MCF 10A (cell line): ENCODE measurements at regions of chr6 and their contacts with region 1.

Region 1: DNA sequence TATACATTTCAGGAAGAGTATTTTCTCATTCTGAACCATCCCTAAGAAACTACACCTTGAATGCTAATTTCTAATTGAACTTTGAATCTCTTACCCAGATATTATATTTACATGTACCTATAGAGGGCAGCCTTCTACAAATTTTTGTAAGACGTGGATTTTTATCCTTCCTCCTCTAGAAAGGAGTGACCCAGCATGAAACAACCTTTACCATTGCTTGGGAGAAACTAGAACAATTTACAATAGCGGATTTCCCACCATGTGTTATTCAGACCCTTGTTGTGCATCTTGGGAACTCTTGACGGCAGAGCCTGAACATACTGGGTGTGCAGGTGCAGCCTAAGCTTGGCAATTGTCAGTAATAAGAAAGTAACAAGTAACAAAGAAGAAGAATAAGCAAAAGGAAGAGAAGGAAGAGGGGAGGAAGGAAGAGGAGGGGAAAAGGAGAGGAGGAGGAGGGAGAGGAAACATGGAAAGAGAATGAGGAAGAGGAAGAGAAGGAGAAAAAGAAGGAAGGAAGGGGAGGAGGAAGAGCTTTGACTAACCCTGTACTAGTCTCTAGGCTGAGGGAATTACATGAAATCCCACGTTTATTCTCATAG is 10.8 kb upstream of the TAAR1 start:
- DNase-seq: peak; percentile 51
- H3K4me3 Mint-ChIP-seq: no peak overlapping the region
- H3K27ac Mint-ChIP-seq: no peak overlapping the region
- H3K4me1 Mint-ChIP-seq: peaks cover 7% of the 10 kb centered on the region
- H3K27me3 Mint-ChIP-seq: no peaks in the 10 kb centered on the region
- CTCF ChIP-seq: peak; percentile 54

Region 2: GRCh38 chr6:132202574-132202973 is 467.2 kb before region 1 on chr6:
- CTCF ChIA-PET with region 1: no interaction called
- POLR2A ChIA-PET with region 1: no interaction called
- intact Hi-C with region 1: no loop called
- DNase-seq: no peak
- H3K4me3 Mint-ChIP-seq: no peak overlapping the region
- H3K27ac Mint-ChIP-seq: no peak overlapping the region
- H3K4me1 Mint-ChIP-seq: peaks cover 14% of the 10 kb centered on the region
- H3K27me3 Mint-ChIP-seq: no peaks in the 10 kb centered on the region
- CTCF ChIP-seq: no peak

Region 3: GRCh38 chr6:132530293-132530974 is 139.4 kb before region 1 on chr6:
- CTCF ChIA-PET with region 1: interaction called, 10 read pairs
- POLR2A ChIA-PET with region 1: no interaction called
- intact Hi-C with region 1: loop called (anchors 1 kb)
- DNase-seq: peak; percentile 78
- H3K4me3 Mint-ChIP-seq: no peak overlapping the region
- H3K27ac Mint-ChIP-seq: no peak overlapping the region
- H3K4me1 Mint-ChIP-seq: no peaks in the 10 kb centered on the region
- H3K27me3 Mint-ChIP-seq: no peaks in the 10 kb centered on the region
- CTCF ChIP-seq: peak; percentile 62

Region 4: GRCh38 chr6:132703936-132704335 is 34.1 kb after region 1 on chr6:
- CTCF ChIA-PET with region 1: interaction called, 13 read pairs
- POLR2A ChIA-PET with region 1: no interaction called
- intact Hi-C with region 1: no loop called
- DNase-seq: no peak
- H3K4me3 Mint-ChIP-seq: no peak overlapping the region
- H3K27ac Mint-ChIP-seq: no peak overlapping the region
- H3K4me1 Mint-ChIP-seq: peaks cover 12% of the 10 kb centered on the region
- H3K27me3 Mint-ChIP-seq: no peaks in the 10 kb centered on the region
- CTCF ChIP-seq: no peak

Region 5: DNA sequence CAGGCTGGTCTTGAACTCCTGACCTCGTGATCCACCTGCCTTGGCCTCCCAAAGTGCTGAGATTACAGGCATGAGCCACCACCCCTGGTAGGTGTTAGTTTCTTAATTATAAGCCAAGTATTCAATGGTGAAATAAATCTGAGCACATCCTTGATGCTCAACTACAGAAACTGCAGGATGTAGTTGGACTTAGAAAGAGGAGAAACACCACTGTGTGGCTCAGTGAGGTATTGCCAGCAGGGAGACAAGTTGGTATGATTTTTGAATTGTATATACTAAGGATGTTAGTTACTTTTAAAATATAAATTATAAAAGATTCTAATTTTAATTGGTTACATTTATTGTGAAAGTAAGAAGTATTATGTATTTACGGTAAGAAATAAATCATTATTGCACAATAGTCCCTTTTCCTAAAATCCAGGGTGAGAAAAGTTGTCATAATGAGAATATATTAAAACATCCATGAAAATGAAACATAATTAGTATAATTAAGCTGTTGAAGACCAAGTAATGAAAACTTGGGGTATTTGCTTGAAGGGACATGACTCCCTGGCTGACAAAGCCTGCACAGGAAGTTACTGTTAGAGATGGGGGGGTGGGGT is 111.1 kb after region 1 on chr6:
- CTCF ChIA-PET with region 1: interaction called, 13 read pairs
- POLR2A ChIA-PET with region 1: no interaction called
- intact Hi-C with region 1: loop called (anchors 2 kb)
- DNase-seq: peak; percentile 21
- H3K4me3 Mint-ChIP-seq: no peak overlapping the region
- H3K27ac Mint-ChIP-seq: no peak overlapping the region
- H3K4me1 Mint-ChIP-seq: no peaks in the 10 kb centered on the region
- H3K27me3 Mint-ChIP-seq: no peaks in the 10 kb centered on the region
- CTCF ChIP-seq: peak; percentile 32